K562 (cell line): ENCODE measurements at regions of chr15 and their contacts with region 1.

Region 1: GRCh38 chr15:37995461-37996347 is 61.3 kb downstream of the TMCO5A start:
- DNase-seq: peak in 2 of 4 experiments; percentile 11 to 41
- ATAC-seq: peak; percentile 73
- H3K4me3 ChIP-seq: no peak overlapping the region
- H3K27ac ChIP-seq: no peak overlapping the region
- H3K4me1 ChIP-seq: no peaks in the 10 kb centered on the region
- H3K27me3 ChIP-seq: no peaks in the 10 kb centered on the region
- CTCF ChIP-seq: peak; percentile 29 to 74 (median 55); a peak in 4 of 6 replicates
- EP300 ChIP-seq: no peak
- POLR2A ChIP-seq: no peak
- RAD21 ChIP-seq: peak; percentile 67 to 71

Region 2: DNA sequence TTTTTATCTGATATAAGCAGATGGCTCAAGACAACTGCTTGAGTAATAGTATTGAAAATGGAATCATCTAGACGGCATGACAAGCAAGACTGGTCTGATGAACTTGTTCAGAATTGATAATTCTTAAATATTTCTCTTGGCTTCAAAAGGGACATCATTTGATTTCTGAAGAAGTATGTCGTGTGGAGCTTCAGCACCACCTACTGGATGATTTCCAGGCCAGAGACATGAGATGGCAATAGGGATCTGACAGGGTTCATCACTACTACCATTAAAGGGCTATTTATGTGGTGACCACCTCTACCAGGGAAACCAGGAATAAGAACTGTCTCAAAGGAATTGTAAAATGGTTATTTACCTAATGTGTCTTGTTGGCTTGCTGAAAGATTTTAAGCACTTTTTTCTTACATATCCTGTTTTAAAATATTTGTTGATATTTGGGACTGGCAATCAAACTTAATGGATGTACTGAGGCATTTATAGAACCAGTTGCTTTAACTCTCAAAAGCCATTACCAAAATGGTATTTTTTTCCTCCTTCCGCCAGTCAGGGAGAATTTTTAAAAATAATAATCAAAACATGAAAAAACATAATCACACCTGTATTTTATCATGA is 358.7 kb after region 1 on chr15:
- CTCF ChIA-PET with region 1: interaction called, 15 read pairs
- POLR2A ChIA-PET with region 1: no interaction called
- in situ Hi-C with region 1: no loop called
- intact Hi-C with region 1: loop called (anchors 2 kb)
- DNase-seq: peak; percentile 39 to 73 (median 42)
- ATAC-seq: peak; percentile 92
- H3K4me3 ChIP-seq: no peak overlapping the region
- H3K27ac ChIP-seq: no peak overlapping the region
- H3K4me1 ChIP-seq: no peaks in the 10 kb centered on the region
- H3K27me3 ChIP-seq: no peaks in the 10 kb centered on the region
- CTCF ChIP-seq: peak; percentile 57 to 77 (median 77)
- EP300 ChIP-seq: no peak
- POLR2A ChIP-seq: no peak
- RAD21 ChIP-seq: peak; percentile 75 to 82

Region 3: DNA sequence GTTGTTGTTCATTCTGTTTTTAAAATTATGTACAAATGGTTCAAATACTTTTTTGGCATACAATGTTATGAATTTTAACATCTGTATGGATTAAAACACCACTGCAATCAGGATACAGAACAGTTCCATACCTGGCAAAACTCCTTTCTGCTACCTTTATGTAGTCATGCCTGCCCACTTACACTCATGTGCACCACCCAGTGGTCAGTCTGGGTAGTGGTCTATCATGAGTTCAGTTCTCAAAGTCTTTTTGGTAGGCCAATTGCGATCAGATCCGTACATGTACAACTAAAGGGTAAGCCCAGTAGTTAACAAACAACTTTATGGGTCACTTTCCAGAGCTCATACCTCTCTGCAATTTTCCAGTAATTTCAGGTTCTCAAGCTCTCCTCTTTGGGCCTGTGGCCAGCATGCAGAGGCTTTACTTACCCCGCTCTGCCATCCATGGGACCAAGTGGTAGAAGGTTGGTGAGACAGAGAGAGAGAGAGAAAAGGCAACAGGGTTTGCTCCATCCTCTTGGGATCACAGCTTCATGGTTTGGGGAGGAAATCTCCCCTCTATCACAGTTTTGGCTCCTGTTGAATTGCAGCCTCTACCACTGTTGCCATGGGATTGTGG is 394.3 kb after region 1 on chr15:
- CTCF ChIA-PET with region 1: interaction called, 4 read pairs
- POLR2A ChIA-PET with region 1: no interaction called
- in situ Hi-C with region 1: no loop called
- intact Hi-C with region 1: loop called (anchors 5 kb)
- DNase-seq: peak; percentile 55 to 78 (median 58)
- ATAC-seq: peak; percentile 95
- H3K4me3 ChIP-seq: no peak overlapping the region
- H3K27ac ChIP-seq: no peak overlapping the region
- H3K4me1 ChIP-seq: no peaks in the 10 kb centered on the region
- H3K27me3 ChIP-seq: no peaks in the 10 kb centered on the region
- CTCF ChIP-seq: peak; percentile 70 to 86 (median 82)
- EP300 ChIP-seq: no peak
- POLR2A ChIP-seq: no peak
- RAD21 ChIP-seq: peak; percentile 42 to 82

Region 4: DNA sequence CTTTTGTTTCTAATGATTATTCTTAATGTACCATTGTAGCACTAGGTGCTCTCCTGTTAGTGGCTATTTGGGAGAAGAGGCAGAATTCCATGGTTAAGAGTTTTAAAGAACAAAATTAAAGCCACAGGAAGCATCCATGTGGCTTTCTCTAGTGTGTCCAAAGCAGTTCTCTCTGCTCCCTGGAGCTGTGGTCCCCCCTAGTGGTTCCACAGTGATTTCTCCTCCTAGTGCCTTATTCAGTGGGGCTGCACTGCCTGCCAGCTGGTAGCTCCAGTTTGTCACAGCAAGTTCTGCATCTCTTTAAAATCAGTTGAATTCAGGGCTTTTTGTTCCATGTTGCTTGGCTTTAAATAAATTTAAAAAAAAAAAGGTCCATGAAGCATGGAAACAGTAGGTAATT is 418.7 kb after region 1 on chr15:
- CTCF ChIA-PET with region 1: interaction called, 3 read pairs
- POLR2A ChIA-PET with region 1: no interaction called
- in situ Hi-C with region 1: no loop called
- intact Hi-C with region 1: loop called (anchors 1 kb)
- DNase-seq: peak; percentile 14 to 68 (median 40)
- ATAC-seq: peak; percentile 97
- H3K4me3 ChIP-seq: no peak overlapping the region
- H3K27ac ChIP-seq: no peak overlapping the region
- H3K4me1 ChIP-seq: no peaks in the 10 kb centered on the region
- H3K27me3 ChIP-seq: peaks cover 3 to 13% of the 10 kb centered on the region in 2 experiments; a peak in 2 of 5 replicates
- CTCF ChIP-seq: peak; percentile 60 to 67 (median 62)
- EP300 ChIP-seq: no peak
- POLR2A ChIP-seq: no peak
- RAD21 ChIP-seq: peak; percentile 43 to 69

Region 5: DNA sequence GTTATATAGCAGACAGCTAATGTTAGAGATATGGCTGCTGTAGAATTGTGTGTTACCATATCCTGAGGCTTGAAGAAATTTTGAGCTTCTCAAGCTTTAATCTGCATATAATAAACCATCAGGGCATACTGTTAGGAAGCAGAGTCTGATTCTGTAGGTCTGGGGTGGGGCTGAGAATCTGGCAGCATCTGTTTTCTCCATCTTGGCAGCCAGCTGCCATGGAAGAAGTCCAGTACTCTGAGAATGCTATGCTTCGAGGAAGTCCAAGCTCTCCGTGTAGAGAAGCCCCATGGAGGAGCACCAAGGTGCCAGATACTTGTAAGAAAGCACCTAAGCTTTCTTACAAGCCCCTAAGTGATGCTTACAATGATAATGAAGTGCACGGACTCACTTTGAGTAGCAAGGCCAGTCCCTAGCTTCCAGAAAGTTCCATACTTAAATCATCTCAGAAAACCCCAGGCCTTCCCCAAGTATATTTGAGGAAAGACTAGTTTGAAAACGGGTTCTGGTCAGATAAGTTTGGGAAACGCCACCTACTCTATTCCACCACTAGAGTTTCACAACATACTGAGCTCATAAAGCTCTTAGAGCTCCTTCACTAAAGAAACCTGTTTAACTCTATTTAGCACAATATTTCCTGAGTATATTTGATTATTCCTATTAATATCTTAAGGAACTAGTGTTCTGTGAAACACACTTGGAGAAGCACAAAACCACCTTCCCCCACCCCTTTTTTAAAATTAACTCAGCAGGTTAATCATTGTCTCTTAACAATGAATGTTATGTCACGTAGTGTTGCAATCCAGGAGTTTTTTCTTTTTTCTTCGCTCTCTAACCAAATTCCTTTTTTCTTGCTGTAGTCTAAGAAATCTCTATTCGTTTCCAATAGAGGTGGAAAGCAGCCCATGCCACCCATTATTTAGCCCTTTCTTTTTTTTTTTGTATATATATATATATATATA is 628.8 kb after region 1 on chr15:
- CTCF ChIA-PET with region 1: no interaction called
- POLR2A ChIA-PET with region 1: no interaction called
- in situ Hi-C with region 1: no loop called
- intact Hi-C with region 1: loop called (anchors 2 kb)
- DNase-seq: no peak
- ATAC-seq: no peak
- H3K4me3 ChIP-seq: no peak overlapping the region
- H3K27ac ChIP-seq: no peak overlapping the region
- H3K4me1 ChIP-seq: peaks cover 0 to 2% of the 10 kb centered on the region in 2 experiments; a peak in 2 of 5 replicates
- H3K27me3 ChIP-seq: peaks cover 0 to 4% of the 10 kb centered on the region in 2 experiments; a peak in 3 of 5 replicates
- CTCF ChIP-seq: no peak
- EP300 ChIP-seq: no peak
- POLR2A ChIP-seq: no peak
- RAD21 ChIP-seq: no peak

Region 6: GRCh38 chr15:38690689-38691332 is 695.1 kb after region 1 on chr15:
- CTCF ChIA-PET with region 1: no interaction called
- POLR2A ChIA-PET with region 1: no interaction called
- in situ Hi-C with region 1: loop called (anchors 5 kb)
- intact Hi-C with region 1: loop called (anchors 5 kb)
- DNase-seq: peak; percentile 60 to 84 (median 66)
- ATAC-seq: peak; percentile 90
- H3K4me3 ChIP-seq: no peak overlapping the region
- H3K27ac ChIP-seq: no peak overlapping the region
- H3K4me1 ChIP-seq: no peaks in the 10 kb centered on the region
- H3K27me3 ChIP-seq: no peaks in the 10 kb centered on the region; a peak in 1 of 5 replicates
- CTCF ChIP-seq: peak; percentile 69 to 83 (median 78)
- EP300 ChIP-seq: no peak
- POLR2A ChIP-seq: no peak
- RAD21 ChIP-seq: peak; percentile 33 to 71

Region 7: DNA sequence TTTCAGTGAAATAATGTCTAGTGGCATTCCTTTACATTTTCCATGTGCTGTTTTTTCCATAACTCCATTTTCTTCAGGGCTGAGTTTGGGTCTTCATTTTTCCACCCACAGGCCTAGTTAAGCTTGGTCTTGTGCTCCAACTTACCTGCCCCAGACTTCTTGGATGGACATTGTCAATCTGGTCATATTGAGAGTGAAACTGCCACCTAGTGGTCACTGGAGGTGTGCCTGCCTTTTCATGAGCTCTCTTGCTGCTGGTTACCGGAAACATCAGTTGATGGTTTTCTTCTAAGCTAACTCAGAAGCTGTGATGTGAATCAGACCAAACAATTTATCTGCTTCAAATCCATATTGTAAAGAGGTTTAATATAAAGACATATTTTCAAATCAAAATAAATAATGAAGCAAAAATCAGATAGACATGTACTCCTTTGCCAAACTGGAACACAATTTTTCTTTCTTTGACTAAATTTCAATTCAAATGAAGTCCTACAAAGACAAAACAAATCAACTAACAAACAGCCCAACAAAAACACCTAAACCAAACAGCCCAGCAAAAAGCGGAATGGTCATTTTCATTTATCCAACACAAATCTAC is 704.0 kb after region 1 on chr15:
- CTCF ChIA-PET with region 1: no interaction called
- POLR2A ChIA-PET with region 1: no interaction called
- in situ Hi-C with region 1: loop called (anchors 5 kb)
- intact Hi-C with region 1: loop called (anchors 5 kb)
- DNase-seq: peak; percentile 68 to 79 (median 74)
- ATAC-seq: peak; percentile 94
- H3K4me3 ChIP-seq: no peak overlapping the region
- H3K27ac ChIP-seq: no peak overlapping the region
- H3K4me1 ChIP-seq: no peaks in the 10 kb centered on the region
- H3K27me3 ChIP-seq: peaks cover 0 to 8% of the 10 kb centered on the region in 2 experiments; a peak in 3 of 5 replicates
- CTCF ChIP-seq: peak; percentile 56 to 86 (median 74)
- EP300 ChIP-seq: no peak
- POLR2A ChIP-seq: no peak
- RAD21 ChIP-seq: peak; percentile 34 to 68

Region 8: DNA sequence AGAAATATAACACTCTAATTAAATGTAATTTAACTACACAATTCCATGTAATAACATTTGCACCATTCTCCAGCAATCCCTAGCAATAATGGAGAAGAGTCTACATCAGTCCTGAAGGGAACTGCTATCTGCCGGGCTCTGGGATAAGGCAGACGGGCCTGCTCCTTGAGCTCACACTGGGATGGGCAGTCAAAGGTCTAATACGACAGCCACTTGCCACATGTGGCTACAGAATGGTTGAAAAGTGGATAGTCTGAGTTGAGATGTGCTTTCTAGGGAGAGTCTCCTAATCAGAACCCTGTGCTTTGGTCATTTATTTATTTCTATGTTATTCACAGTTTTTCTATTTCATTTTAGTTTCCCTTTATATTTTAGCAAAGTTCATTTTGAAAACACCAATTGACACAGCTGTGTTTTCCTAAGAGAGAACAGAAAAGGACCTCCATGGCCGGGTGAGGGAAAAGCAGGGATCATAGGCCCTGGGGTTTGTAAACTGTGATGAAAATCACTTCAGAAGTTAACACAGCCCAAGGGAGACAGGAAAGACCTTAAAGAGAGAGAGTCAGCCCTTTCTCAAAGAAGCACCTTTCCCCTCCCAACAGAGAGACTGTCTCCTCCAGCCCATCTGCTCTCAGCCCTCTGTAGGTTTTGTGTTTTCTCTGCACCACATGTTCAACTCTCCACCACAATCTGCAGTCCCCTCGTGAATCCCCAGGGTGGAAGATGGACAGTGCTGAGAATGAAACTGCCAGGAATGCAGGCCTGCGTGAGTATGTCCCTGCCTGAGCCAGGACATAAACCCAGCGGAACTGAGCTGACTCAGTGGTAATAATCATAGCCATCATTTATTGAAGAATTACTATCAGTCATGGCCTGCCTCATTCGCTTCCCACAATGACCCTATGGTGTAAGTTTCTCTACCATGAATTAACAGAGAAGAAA is 1775.3 kb after region 1 on chr15:
- CTCF ChIA-PET with region 1: no interaction called
- POLR2A ChIA-PET with region 1: no interaction called
- in situ Hi-C with region 1: no loop called
- intact Hi-C with region 1: no loop called
- DNase-seq: no peak
- ATAC-seq: peak; percentile 77
- H3K4me3 ChIP-seq: no peak overlapping the region
- H3K27ac ChIP-seq: no peak overlapping the region; the same call in 2 of the 3 replicates
- H3K4me1 ChIP-seq: no peaks in the 10 kb centered on the region; a peak in 1 of 5 replicates
- H3K27me3 ChIP-seq: no peaks in the 10 kb centered on the region
- CTCF ChIP-seq: no peak
- EP300 ChIP-seq: no peak
- POLR2A ChIP-seq: no peak
- RAD21 ChIP-seq: no peak